Upper lobe of right lung (tissue), 1 donor: ENCODE measurements at regions of chr2 and their contacts with region 1.

Region 1: DNA sequence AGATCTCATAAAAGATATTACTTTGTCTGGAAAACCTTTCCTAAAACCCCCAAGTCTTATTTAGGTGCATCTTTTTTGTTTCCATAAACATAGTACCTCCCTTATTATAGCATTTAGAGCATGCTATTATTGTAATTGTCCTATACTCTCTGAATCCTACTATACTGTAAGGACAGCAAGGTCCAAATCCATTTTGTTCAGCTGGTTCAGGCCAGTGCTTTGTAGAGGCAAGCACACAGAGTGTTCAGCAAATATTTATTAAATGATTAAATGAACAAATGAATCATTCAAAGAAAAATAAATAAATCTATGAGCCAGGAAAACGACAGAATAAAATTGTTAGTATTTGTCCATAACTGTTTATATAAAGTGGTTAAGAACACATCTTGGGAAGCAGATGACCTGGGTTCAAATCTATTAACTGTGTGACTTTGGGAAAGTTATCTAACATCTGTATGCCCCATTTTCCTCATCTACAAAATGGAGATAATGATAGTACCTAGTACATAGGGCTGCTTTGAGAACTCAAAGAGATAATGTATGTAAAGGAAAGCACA is 86.0 kb downstream of the COL3A1 start:
- DNase-seq: no peak
- ATAC-seq: no peak
- H3K4me3 ChIP-seq: no peak overlapping the region
- H3K27ac ChIP-seq: no peak overlapping the region
- H3K4me1 ChIP-seq: no peaks in the 10 kb centered on the region
- H3K27me3 ChIP-seq: no peaks in the 10 kb centered on the region
- CTCF ChIP-seq: no peak

Region 2: GRCh38 chr2:188997263-188997662 is 62.9 kb before region 1 on chr2:
- intact Hi-C with region 1: loop called (anchors 10 kb)
- DNase-seq: no peak
- ATAC-seq: no peak
- H3K4me3 ChIP-seq: no peak overlapping the region
- H3K27ac ChIP-seq: no peak overlapping the region
- H3K4me1 ChIP-seq: no peaks in the 10 kb centered on the region
- H3K27me3 ChIP-seq: no peaks in the 10 kb centered on the region
- CTCF ChIP-seq: no peak